ENCODE measurements at regions of chr10 and their contacts with region 1.

Region 1: DNA sequence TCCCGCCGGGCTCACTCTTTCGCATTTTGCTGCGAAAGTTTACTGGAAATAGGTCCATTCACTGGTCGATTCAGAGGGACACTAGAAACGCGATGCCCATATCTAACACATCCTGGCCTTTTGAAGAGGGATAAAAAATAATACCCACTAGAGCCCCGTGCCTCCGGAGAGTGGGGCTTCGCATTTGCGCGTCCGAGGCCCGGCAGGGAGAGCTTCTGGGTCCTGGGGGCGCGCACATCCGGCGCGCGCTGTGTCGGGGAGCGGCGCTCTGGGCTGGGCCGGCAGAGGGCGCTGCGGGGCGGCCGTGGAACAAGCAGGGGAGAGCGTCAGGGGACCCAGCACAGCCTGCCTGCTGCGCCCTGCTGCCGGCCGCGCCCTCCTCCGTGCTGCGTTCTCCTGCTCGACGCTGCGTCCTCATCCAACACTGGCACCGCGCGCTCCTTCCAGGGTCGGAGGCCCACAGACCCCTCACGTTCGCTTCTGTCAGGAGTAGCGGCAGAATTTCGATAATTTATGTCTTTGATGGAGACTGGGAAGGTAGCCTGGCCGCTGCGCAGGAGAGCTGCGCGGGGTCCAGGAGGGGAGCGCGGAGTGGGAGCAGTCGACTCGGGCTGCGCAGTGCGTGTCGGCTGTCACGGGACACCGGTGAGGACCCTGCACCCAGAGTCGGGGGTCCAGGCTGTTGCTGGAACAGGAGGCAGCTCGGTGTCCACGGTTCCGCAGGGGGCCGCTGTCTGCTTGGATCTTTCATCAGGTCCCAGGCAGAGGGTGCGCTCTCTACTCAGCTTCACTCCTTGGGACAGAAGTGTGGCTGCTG is 41.5 kb upstream of the ZNF32 start:
- DNase-seq: peak; percentile 62
- H3K4me3 ChIP-seq: peak overlapping the region; percentile 62
- H3K27ac ChIP-seq: no peak overlapping the region
- H3K27me3 ChIP-seq: no peaks in the 10 kb centered on the region
- CTCF ChIP-seq: peak; percentile 72

Region 2: DNA sequence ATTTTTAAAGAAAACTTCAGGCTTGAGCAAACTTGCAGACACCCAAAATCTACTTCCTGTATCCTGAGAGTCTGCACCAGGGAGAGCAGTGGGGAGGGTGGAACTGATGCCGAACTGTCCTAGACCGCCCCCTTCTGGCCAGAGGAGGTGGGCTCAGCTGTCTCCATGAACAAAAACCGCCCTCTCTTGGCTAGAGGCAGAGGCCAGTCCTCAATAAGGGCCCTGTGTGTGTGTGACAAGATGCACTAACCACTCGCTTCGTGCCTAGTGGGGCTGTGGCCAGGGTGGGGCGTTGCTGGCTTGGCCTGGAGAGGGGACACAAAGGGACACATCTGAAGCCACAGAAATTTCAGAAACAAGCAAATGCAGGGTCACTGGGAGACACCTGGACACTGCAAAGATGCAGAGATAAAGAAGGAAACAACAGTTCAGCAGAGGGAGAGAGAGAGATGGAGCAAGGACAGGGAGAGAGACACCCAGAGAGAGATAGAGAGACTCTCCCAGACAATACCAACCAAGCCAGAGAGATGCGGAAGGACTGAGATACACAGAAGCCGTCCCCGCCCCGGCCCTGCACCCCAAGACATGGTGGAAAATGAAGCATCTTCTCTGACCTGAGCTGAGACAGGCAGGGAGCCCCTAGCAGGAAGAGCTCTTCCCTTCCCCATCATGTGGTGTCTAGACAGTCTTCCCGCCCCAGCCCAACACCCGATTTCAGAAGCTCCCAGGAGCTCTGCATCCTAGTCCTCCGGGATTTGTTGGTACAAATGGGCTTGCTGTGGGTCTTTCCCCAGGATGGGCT is 341.5 kb before region 1 on chr10:
- in situ Hi-C with region 1: no loop called
- DNase-seq: peak; percentile 75
- H3K4me3 ChIP-seq: no peak overlapping the region
- H3K27ac ChIP-seq: no peak overlapping the region
- H3K27me3 ChIP-seq: peaks cover 3% of the 10 kb centered on the region
- CTCF ChIP-seq: peak; percentile 99

Region 3: DNA sequence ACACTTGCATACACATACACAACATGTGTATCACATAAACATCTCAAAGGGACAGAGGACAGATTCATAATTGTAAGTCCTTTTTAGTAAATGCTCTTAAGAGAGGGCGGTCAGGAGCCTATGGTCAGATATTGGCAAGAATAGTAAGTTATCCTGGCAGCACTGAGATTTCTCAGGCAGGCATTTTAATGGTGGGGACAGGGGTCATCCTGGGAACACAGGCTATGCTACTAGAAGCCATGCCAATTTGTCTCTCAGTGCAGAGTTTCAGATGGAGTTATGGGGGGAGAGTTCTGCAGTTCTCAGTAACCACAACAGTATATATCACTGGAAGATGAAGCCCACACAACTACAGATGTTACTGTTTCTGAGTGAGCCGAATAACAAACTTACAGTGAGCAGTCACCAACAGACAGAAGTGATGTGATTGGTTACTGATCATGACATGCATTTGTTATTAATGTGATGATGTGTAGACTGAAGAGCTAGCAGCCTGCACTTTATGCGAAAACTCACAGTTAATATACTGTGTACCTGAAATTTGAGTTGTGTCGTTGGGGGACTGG is 236.8 kb before region 1 on chr10:
- in situ Hi-C with region 1: no loop called
- DNase-seq: no peak
- H3K4me3 ChIP-seq: no peak overlapping the region
- H3K27ac ChIP-seq: no peak overlapping the region
- H3K27me3 ChIP-seq: no peaks in the 10 kb centered on the region
- CTCF ChIP-seq: no peak

Region 4: GRCh38 chr10:44310762-44311562 is 620.8 kb after region 1 on chr10:
- in situ Hi-C with region 1: loop called (anchors 25 kb)
- DNase-seq: peak; percentile 67
- H3K4me3 ChIP-seq: peak overlapping the region; percentile 40
- H3K27ac ChIP-seq: no peak overlapping the region
- H3K27me3 ChIP-seq: no peaks in the 10 kb centered on the region
- CTCF ChIP-seq: peak; percentile 59